ENCODE measurements at regions of chr19 and their contacts with region 1.

Region 1: DNA sequence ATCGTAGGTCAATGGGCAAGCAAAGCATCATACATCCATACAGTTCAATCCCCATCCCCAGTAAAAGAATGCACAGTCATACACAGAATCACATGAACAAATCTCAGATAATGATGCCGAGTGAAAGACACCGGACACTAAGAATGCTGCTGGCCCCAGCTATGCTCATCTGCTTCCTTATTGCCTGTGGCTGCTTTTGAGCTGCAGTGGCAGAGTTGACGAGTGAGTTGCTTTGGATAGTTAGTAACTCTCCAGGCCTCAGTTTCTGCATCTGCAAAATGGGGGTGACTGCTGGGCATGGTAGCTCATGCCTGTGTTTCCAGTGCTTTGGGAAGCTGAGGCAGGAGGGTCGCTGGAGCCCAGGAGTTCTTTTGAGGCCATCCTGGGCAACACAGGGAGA is 12.9 kb upstream of the NFIC start:
- DNase-seq: no peak

Region 2: DNA sequence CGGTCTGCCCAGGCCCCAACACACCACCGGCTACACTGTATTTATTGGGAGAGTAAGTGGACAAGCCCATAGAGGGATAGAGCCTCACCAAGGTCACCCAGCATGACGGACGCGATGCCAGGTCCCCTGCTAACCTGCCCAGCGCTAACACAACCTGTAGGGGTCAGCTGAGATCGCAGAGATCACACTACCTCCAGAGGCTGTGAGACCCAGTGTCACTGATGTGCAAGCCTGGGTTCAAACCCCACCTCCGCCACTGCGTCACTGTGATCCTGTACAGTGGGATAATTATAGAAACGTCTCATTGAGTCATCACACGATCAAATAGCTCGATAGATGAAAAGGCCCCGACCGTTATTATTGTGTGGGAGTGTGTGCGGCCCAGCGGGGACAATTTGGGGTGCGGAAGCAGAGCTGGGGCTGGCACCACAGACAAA is 313.8 kb before region 1 on chr19:
- intact Hi-C with region 1: no loop called
- DNase-seq: no peak

Region 3: GRCh38 chr19:3336680-3337523 is 16.6 kb before region 1 on chr19:
- intact Hi-C with region 1: loop called in 1 of 2 experiments (anchors 1 kb)
- DNase-seq: peak; percentile 95

Region 4: GRCh38 chr19:3440082-3440481 is 86.6 kb after region 1 on chr19:
- intact Hi-C with region 1: no loop called
- DNase-seq: no peak